OCI-LY7 (cell line): ENCODE measurements at regions of chr13 and their contacts with region 1.

Region 1: DNA sequence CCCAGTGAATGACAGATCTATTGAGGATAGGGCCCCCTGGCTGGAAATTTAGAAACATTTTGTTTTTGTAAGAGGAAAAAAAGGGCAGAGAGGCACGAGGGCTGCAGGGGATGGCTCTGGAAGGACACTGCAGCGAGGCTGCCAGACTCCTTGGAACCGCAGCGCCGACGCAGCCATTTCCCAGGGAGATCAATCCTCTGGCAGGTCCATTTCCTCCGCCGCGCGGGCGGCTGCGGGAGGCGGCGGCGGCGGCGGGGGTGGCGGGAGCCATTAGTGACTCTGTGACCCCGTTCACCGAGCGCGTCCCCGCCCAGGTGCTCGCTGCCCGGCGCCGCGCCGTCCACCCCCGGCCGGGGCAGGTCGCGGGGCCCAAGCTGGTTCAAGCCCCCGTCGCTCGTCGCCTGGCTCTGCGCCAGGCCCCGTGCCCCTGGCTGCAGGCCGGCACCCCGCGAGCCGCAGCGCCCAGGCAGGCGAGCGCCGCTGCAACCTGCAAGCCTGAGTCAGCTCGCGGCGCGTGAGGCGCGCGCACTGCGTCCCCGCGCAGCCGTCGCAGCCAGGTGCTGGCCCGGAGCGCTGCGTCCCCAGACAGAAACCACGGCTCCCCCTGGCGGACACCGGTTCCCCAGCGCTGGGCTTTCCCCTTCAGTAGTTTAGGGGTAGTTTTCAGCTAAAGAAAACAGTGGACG is 192.6 kb downstream of the KATNAL1 start:
- DNase-seq: peak; percentile 90
- H3K4me3 ChIP-seq: peak overlapping the region; percentile 71
- H3K27ac ChIP-seq: no peak overlapping the region
- H3K4me1 ChIP-seq: peaks cover 9% of the 10 kb centered on the region
- CTCF ChIP-seq: peak; percentile 90

Region 2: GRCh38 chr13:29438769-29439168 is 675.9 kb before region 1 on chr13:
- CTCF ChIA-PET with region 1: no interaction called
- POLR2A ChIA-PET with region 1: no interaction called
- intact Hi-C with region 1: no loop called
- DNase-seq: no peak
- H3K4me3 ChIP-seq: no peak overlapping the region
- H3K27ac ChIP-seq: no peak overlapping the region
- H3K4me1 ChIP-seq: peaks cover 65% of the 10 kb centered on the region
- CTCF ChIP-seq: no peak

Region 3: GRCh38 chr13:29508130-29508875 is 606.4 kb before region 1 on chr13:
- CTCF ChIA-PET with region 1: no interaction called
- POLR2A ChIA-PET with region 1: no interaction called
- intact Hi-C with region 1: loop called (anchors 1 kb)
- DNase-seq: peak; percentile 74
- H3K4me3 ChIP-seq: no peak overlapping the region
- H3K27ac ChIP-seq: no peak overlapping the region
- H3K4me1 ChIP-seq: no peaks in the 10 kb centered on the region
- CTCF ChIP-seq: peak; percentile 97

Region 4: GRCh38 chr13:29771247-29771646 is 343.5 kb before region 1 on chr13:
- CTCF ChIA-PET with region 1: interaction called, 10 read pairs
- POLR2A ChIA-PET with region 1: interaction called, 4 read pairs
- intact Hi-C with region 1: loop called (anchors 1 kb)
- DNase-seq: peak; percentile 41
- H3K4me3 ChIP-seq: no peak overlapping the region
- H3K27ac ChIP-seq: no peak overlapping the region
- H3K4me1 ChIP-seq: no peaks in the 10 kb centered on the region
- CTCF ChIP-seq: peak; percentile 81

Region 5: GRCh38 chr13:29850224-29850898 is 264.4 kb before region 1 on chr13 and contains the start of gene UBL3:
- CTCF ChIA-PET with region 1: no interaction called
- POLR2A ChIA-PET with region 1: no interaction called
- intact Hi-C with region 1: loop called (anchors 5 kb)
- DNase-seq: peak; percentile 93
- H3K4me3 ChIP-seq: peak within 1 kb of the TSS; percentile 86
- H3K27ac ChIP-seq: peak within 1 kb of the TSS; percentile 24
- H3K4me1 ChIP-seq: peaks cover 16% of the 10 kb centered on the region
- CTCF ChIP-seq: no peak
- total RNA-seq, gene UBL3: 5.6 and 6.7 TPM in 2 replicates

Region 6: DNA sequence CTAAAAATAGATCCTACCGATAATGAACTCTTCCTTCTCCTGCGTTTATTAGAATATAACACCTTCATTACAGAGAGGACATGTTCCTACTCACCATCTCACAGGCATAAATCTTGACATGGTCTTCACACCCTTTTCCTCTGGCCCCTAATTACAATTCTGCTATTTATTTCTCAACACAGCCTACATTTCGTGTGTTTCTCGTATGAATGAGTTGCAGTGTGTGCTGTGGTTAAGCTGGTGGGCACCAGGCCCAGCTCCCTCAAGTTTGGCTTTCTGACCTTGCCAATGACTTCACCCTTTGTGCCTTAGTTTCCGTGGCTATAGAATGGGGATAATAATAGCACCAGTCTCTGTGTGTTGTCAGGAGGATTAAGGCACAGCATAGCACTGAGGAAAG is 204.9 kb after region 1 on chr13:
- CTCF ChIA-PET with region 1: no interaction called
- POLR2A ChIA-PET with region 1: no interaction called
- intact Hi-C with region 1: no loop called
- DNase-seq: no peak
- H3K4me3 ChIP-seq: no peak overlapping the region
- H3K27ac ChIP-seq: no peak overlapping the region
- H3K4me1 ChIP-seq: peaks cover 50% of the 10 kb centered on the region
- CTCF ChIP-seq: no peak

Region 7: DNA sequence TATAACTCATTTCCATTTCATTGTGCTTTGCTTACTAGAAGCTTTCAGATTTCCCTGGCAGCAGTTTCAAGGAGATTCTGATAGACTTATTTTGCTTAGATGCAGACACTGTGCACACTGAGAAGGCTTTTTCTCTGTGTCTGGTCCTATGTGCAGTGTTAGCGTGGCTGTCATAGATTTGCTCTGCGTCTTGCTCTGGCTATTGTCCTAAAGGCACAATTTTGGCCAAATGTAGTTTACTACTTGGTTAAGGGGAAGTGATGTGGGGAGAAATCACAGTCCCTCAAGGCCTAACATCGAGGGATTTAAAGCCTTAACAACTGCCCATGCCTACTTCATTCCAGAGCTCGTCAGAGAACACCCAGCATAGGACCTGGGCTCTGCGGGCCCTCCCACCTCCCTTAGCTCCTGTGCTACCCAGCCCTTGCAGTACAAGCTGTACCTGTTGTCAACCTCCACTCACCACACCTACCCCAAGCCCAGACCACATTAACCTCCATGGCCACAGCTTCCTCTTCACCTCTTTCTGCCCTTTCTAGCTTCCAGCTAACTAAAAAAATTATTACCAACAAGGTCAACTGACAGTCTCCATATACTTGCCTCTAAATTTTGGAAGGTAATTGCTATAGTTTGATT is 231.6 kb after region 1 on chr13:
- CTCF ChIA-PET with region 1: no interaction called
- POLR2A ChIA-PET with region 1: no interaction called
- intact Hi-C with region 1: no loop called
- DNase-seq: no peak
- H3K4me3 ChIP-seq: no peak overlapping the region
- H3K27ac ChIP-seq: no peak overlapping the region
- H3K4me1 ChIP-seq: no peaks in the 10 kb centered on the region
- CTCF ChIP-seq: no peak

Region 8: GRCh38 chr13:31044377-31045285 is 929.9 kb after region 1 on chr13:
- CTCF ChIA-PET with region 1: no interaction called
- POLR2A ChIA-PET with region 1: no interaction called
- intact Hi-C with region 1: loop called (anchors 10 kb)
- DNase-seq: peak; percentile 84
- H3K4me3 ChIP-seq: no peak overlapping the region
- H3K27ac ChIP-seq: no peak overlapping the region
- H3K4me1 ChIP-seq: peaks cover 12% of the 10 kb centered on the region
- CTCF ChIP-seq: peak; percentile 98